ENCODE measurements at regions of chr14 and their contacts with region 1.

Region 1: DNA sequence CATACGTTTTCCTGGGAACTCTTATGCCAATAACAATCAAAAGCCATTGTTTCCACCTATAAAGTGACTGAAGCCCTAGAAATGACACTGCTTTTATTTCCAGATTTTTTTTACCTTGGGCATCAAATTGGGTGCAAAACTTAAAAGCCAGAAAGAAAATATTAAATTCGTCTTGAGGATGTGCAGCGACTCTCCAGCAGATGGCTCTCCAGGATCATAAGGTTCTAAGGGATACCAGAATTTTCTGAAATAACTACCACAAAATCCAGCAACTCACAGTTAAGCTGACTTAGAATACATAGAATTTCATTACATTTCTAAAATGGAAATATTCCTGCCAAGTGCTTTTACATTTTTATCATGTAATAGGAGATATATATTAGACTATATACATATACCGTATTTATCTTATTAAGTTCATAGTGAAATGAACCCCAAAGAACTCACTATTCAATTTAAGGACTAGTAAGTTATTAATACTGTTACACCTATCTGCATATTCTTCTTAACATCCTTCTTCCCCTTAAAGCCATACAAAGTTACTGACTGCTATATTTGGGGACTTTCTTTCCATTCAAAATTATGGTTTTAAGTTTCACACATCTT is 44.0 kb downstream of the ARMH4 start:
- DNase-seq: peak; percentile 63
- ATAC-seq: no peak
- H3K4me3 ChIP-seq: no peak overlapping the region
- H3K27ac ChIP-seq: no peak overlapping the region
- H3K4me1 ChIP-seq: no peaks in the 10 kb centered on the region
- H3K27me3 ChIP-seq: peaks cover 2% of the 10 kb centered on the region; the same call in 1 of the 2 replicates
- CTCF ChIP-seq: peak; percentile 78; the same call in 1 of the 2 replicates

Region 2: GRCh38 chr14:58027909-58028308 is 80.1 kb before region 1 on chr14:
- CTCF ChIA-PET with region 1: no interaction called
- POLR2A ChIA-PET with region 1: no interaction called
- in situ Hi-C with region 1: no loop called
- intact Hi-C with region 1: no loop called
- DNase-seq: no peak
- ATAC-seq: no peak
- H3K4me3 ChIP-seq: no peak overlapping the region
- H3K27ac ChIP-seq: no peak overlapping the region
- H3K4me1 ChIP-seq: no peaks in the 10 kb centered on the region
- H3K27me3 ChIP-seq: no peaks in the 10 kb centered on the region
- CTCF ChIP-seq: no peak

Region 3: GRCh38 chr14:58166005-58166983 is 58.2 kb after region 1 on chr14:
- CTCF ChIA-PET with region 1: no interaction called
- POLR2A ChIA-PET with region 1: no interaction called
- in situ Hi-C with region 1: no loop called
- intact Hi-C with region 1: loop called (anchors 2 kb)
- DNase-seq: peak; percentile 38
- ATAC-seq: peak; percentile 89
- H3K4me3 ChIP-seq: no peak overlapping the region
- H3K27ac ChIP-seq: no peak overlapping the region
- H3K4me1 ChIP-seq: no peaks in the 10 kb centered on the region
- H3K27me3 ChIP-seq: no peaks in the 10 kb centered on the region
- CTCF ChIP-seq: peak; percentile 88

Region 4: DNA sequence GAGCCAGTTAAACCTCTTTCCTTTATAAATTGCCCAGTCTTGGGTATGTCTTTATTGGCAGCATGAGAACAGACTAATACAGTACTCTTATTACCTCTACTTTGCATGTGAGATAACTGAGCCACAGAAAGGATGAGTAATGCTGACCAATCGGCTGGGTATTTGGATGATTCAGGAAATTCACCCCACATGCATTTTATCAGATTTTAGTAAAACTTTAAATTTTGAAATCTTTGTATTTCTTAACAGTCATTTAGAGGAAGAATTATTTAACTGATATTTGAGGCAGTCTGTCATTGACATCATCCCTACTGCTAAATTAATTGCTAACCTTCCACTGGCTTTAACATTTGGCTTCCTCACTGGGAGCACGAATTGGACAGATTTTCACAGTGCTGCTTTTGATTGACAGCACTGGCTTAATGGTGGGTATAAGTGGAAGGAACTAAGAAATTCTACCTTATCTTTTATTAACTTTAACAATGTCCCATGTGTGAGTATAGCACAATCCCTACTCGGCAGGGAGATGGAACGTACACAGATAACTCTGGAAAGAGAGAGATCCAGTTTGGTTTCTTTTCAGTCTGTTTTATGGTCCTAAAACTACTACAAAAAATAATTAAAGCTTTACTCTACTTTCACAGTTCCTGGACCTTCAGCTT is 790.7 kb after region 1 on chr14:
- CTCF ChIA-PET with region 1: no interaction called
- POLR2A ChIA-PET with region 1: no interaction called
- in situ Hi-C with region 1: no loop called
- intact Hi-C with region 1: no loop called
- DNase-seq: no peak
- ATAC-seq: no peak
- H3K4me3 ChIP-seq: no peak overlapping the region
- H3K27ac ChIP-seq: no peak overlapping the region
- H3K4me1 ChIP-seq: no peaks in the 10 kb centered on the region
- H3K27me3 ChIP-seq: no peaks in the 10 kb centered on the region; the same call in 1 of the 2 replicates
- CTCF ChIP-seq: no peak